Ascending aorta (tissue), 2 donors: ENCODE measurements at regions of chr3 and their contacts with region 1.

Region 1: GRCh38 chr3:101724329-101725193 is at the start of gene CEP97:
- DNase-seq: peak; percentile 80 to 96
- H3K4me3 ChIP-seq: peak within 1 kb of the TSS; percentile 70 to 75
- H3K27ac ChIP-seq: peak within 1 kb of the TSS; percentile 54 to 72
- H3K4me1 ChIP-seq: peaks cover 0 to 4% of the 10 kb centered on the region in 2 donors
- H3K27me3 ChIP-seq: no peaks in the 10 kb centered on the region
- CTCF ChIP-seq: peak in 1 of 3 experiments; percentile 6
- total RNA-seq, gene CEP97: 1.3 TPM

Region 2: GRCh38 chr3:101685870-101686412 is 38.6 kb before region 1 on chr3:
- intact Hi-C with region 1: loop called (anchors 2 kb)
- DNase-seq: no peak
- H3K4me3 ChIP-seq: peak overlapping the region; percentile 72 to 75
- H3K27ac ChIP-seq: peak overlapping the region; percentile 90 to 94
- H3K4me1 ChIP-seq: peaks cover 12 to 21% of the 10 kb centered on the region in 2 donors
- H3K27me3 ChIP-seq: no peaks in the 10 kb centered on the region
- CTCF ChIP-seq: no peak

Region 3: DNA sequence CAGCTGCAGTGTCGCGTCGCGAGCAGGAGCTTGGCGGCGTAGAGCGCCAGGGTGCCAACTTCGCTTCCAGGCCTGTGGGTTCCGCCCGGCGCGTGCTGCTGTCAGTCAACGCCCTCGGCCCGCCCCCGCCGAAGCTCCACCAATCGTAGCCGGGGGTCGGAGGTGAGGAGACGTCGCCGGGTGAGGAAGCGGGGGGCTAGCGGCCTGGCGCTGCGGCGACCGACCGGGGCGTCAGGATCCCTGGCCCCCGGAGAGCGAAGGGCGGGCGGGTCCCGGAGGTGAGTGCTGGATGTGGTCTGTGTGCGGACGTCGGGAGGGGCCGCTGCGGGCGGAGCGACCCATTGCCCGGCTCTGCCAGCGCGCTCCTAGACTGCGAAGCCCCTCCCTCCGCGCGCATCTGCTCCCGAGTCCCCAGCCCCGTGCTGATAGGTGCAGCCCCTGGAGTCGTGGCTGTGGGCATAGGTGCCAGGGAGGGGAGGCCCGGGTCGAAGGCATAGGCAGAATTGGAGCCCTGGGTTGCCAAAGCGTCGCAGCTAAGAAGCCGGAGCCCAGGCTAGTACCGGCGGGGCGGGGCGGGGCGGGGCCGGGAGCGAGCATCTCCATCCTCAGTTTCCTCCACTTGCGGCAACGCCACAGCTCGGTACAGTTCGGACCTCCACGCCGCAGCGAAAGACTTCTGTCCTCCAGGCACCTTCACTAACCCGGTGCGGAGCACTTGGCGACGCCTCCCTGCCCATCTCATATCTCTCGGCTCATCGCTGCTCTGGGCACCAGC is 54.7 kb after region 1 on chr3 and contains the start of gene NXPE3:
- intact Hi-C with region 1: loop called (anchors 1 kb)
- DNase-seq: peak; percentile 74 to 97
- H3K4me3 ChIP-seq: peak within 1 kb of the TSS; percentile 75 to 89
- H3K27ac ChIP-seq: peak within 1 kb of the TSS; percentile 94 to 95
- H3K4me1 ChIP-seq: peaks cover 4 to 17% of the 10 kb centered on the region in 2 donors
- H3K27me3 ChIP-seq: no peaks in the 10 kb centered on the region
- CTCF ChIP-seq: peak in 1 of 3 experiments; percentile 7
- total RNA-seq, gene NXPE3: 25.8 TPM

Region 4: DNA sequence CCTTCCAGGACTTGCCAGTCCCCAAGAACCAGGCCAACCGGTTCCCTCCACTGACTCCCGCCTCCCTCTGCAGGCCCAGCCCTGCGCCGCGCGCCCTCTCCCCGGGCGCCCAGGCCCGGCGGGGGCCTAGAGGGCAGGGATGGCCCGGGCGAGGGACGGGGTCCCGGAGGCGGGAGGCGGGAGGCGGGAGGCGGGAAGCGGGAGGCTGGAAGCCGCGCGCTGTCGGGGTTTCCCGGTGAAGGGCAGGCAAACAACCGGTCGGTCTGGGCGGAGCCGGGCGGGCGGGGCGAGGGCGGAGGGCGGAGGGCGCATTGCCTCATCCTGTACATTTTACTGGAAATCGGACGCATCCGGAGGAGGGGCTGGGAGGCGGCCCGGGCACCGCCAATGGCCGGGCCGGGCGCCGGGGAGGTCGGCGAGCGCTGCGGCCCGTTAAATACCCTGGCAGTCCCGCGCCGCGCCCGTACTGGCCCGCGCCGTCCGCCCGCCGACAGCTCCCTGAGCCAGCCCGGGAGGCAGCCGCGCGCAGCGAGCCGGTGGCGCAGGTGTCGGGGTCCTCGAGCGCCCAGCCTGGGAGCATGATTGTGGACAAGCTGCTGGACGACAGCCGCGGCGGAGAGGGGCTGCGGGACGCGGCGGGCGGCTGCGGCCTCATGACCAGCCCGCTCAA is 124.6 kb after region 1 on chr3 and contains the start of gene NFKBIZ:
- intact Hi-C with region 1: loop called (anchors 5 kb)
- DNase-seq: peak; percentile 87 to 98
- H3K4me3 ChIP-seq: peak within 1 kb of the TSS; percentile 90 to 93
- H3K27ac ChIP-seq: peak within 1 kb of the TSS; percentile 98 to 99
- H3K4me1 ChIP-seq: peaks cover 0 to 26% of the 10 kb centered on the region in 2 donors
- H3K27me3 ChIP-seq: no peaks in the 10 kb centered on the region
- CTCF ChIP-seq: peak in 1 of 3 experiments; percentile 20
- total RNA-seq, gene NFKBIZ: 349 TPM

Region 5: GRCh38 chr3:101898752-101899169 is 174.2 kb after region 1 on chr3:
- intact Hi-C with region 1: no loop called
- DNase-seq: no peak
- H3K4me3 ChIP-seq: no peak overlapping the region
- H3K27ac ChIP-seq: no peak overlapping the region
- H3K4me1 ChIP-seq: no peaks in the 10 kb centered on the region
- H3K27me3 ChIP-seq: no peaks in the 10 kb centered on the region
- CTCF ChIP-seq: no peak